CD4-positive, alpha-beta memory T cell (primary cell): ENCODE measurements at regions of chr12 and their contacts with region 1.

Region 1: GRCh38 chr12:113174461-113175384 is 10.6 kb downstream of the DDX54 start:
- DNase-seq: peak; percentile 67 to 72 (median 68)
- H3K4me3 ChIP-seq: no peak overlapping the region
- H3K4me3 Mint-ChIP-seq: no peak overlapping the region
- H3K27ac ChIP-seq: no peak overlapping the region
- H3K27ac Mint-ChIP-seq: peak overlapping the region in 4 of 7 donors; percentile 42 to 80 (median 66)
- H3K4me1 ChIP-seq: no peaks in the 10 kb centered on the region
- H3K4me1 Mint-ChIP-seq: peaks cover 2 to 7% (median 4%) of the 10 kb centered on the region in 4 donors
- H3K27me3 ChIP-seq: no peaks in the 10 kb centered on the region
- H3K27me3 Mint-ChIP-seq: no peaks in the 10 kb centered on the region

Region 2: GRCh38 chr12:112992541-112993398 is 182.0 kb before region 1 on chr12:
- CTCF ChIA-PET with region 1: interaction called, 9 read pairs
- POLR2A ChIA-PET with region 1: interaction called, 3 read pairs
- intact Hi-C with region 1: loop called (anchors 1 kb)
- DNase-seq: peak; percentile 37 to 62 (median 50)
- H3K4me3 ChIP-seq: no peak overlapping the region
- H3K4me3 Mint-ChIP-seq: no peak overlapping the region
- H3K27ac ChIP-seq: no peak overlapping the region
- H3K27ac Mint-ChIP-seq: peak overlapping the region; percentile 24 to 88 (median 67)
- H3K4me1 ChIP-seq: peaks cover 9% of the 10 kb centered on the region
- H3K4me1 Mint-ChIP-seq: peaks cover 22 to 26% (median 24%) of the 10 kb centered on the region in 4 donors
- H3K27me3 ChIP-seq: no peaks in the 10 kb centered on the region
- H3K27me3 Mint-ChIP-seq: no peaks in the 10 kb centered on the region

Region 3: GRCh38 chr12:113098446-113098896 is 76.3 kb before region 1 on chr12:
- CTCF ChIA-PET with region 1: interaction called, 13 read pairs
- POLR2A ChIA-PET with region 1: no interaction called
- intact Hi-C with region 1: loop called (anchors 2 kb)
- DNase-seq: peak; percentile 52 to 68 (median 60)
- H3K4me3 ChIP-seq: no peak overlapping the region
- H3K4me3 Mint-ChIP-seq: peak overlapping the region in 1 of 8 donors; percentile 4
- H3K27ac ChIP-seq: no peak overlapping the region
- H3K27ac Mint-ChIP-seq: peak overlapping the region in 4 of 7 donors; percentile 64 to 85 (median 75)
- H3K4me1 ChIP-seq: peaks cover 13% of the 10 kb centered on the region
- H3K4me1 Mint-ChIP-seq: peaks cover 14 to 41% (median 20%) of the 10 kb centered on the region in 4 donors
- H3K27me3 ChIP-seq: no peaks in the 10 kb centered on the region
- H3K27me3 Mint-ChIP-seq: peaks cover 0 to 1% of the 10 kb centered on the region in 2 donors

Region 4: GRCh38 chr12:113103756-113104450 is 70.8 kb before region 1 on chr12:
- CTCF ChIA-PET with region 1: interaction called, 13 read pairs
- POLR2A ChIA-PET with region 1: no interaction called
- intact Hi-C with region 1: loop called (anchors 2 kb)
- DNase-seq: peak; percentile 67 to 78 (median 74)
- H3K4me3 ChIP-seq: peak overlapping the region in 1 of 2 donors; percentile 64
- H3K4me3 Mint-ChIP-seq: peak overlapping the region; percentile 80 to 89 (median 86)
- H3K27ac ChIP-seq: peak overlapping the region; percentile 1
- H3K27ac Mint-ChIP-seq: peak overlapping the region; percentile 66 to 94 (median 87)
- H3K4me1 ChIP-seq: peaks cover 6% of the 10 kb centered on the region
- H3K4me1 Mint-ChIP-seq: peaks cover 9 to 24% (median 14%) of the 10 kb centered on the region in 4 donors
- H3K27me3 ChIP-seq: no peaks in the 10 kb centered on the region
- H3K27me3 Mint-ChIP-seq: peaks cover 0 to 1% of the 10 kb centered on the region in 2 donors

Region 5: GRCh38 chr12:113152835-113153814 is 21.6 kb before region 1 on chr12:
- CTCF ChIA-PET with region 1: interaction called, 18 read pairs
- POLR2A ChIA-PET with region 1: interaction called, 3 read pairs
- intact Hi-C with region 1: no loop called
- DNase-seq: peak; percentile 70 to 85 (median 74)
- H3K4me3 ChIP-seq: peak overlapping the region in 1 of 2 donors; percentile 57
- H3K4me3 Mint-ChIP-seq: peak overlapping the region; percentile 73 to 87 (median 85)
- H3K27ac ChIP-seq: peak overlapping the region; percentile 30
- H3K27ac Mint-ChIP-seq: peak overlapping the region in 6 of 7 donors; percentile 9 to 86 (median 75)
- H3K4me1 ChIP-seq: peaks cover 20% of the 10 kb centered on the region
- H3K4me1 Mint-ChIP-seq: peaks cover 9 to 29% (median 13%) of the 10 kb centered on the region in 4 donors
- H3K27me3 ChIP-seq: peaks cover 6% of the 10 kb centered on the region
- H3K27me3 Mint-ChIP-seq: peaks cover 0 to 9% of the 10 kb centered on the region in 2 donors

Region 6: DNA sequence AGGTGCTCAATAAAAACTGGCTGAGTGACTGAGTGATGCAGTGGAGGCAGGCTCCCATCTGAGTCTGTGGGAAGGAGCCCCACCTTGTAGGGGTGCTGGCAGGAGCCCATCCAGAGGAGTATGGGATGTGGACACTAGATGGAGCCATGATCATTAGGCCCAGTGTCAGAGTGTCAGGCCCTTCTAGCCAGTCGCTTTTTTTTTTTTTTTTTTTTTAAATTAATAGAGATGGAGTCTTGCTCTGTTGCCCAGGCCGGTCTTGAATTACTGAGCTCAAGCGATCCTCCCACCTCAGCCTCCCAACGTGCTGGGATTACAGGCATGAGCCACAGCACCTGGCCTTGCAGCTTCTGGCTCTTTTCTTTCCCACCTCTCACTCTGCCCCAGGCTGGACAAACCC is 22.3 kb after region 1 on chr12:
- CTCF ChIA-PET with region 1: interaction called, 11 read pairs
- POLR2A ChIA-PET with region 1: no interaction called
- intact Hi-C with region 1: no loop called
- DNase-seq: peak; percentile 59 to 68 (median 62)
- H3K4me3 ChIP-seq: no peak overlapping the region
- H3K4me3 Mint-ChIP-seq: no peak overlapping the region
- H3K27ac ChIP-seq: no peak overlapping the region
- H3K27ac Mint-ChIP-seq: peak overlapping the region in 2 of 7 donors; percentile 46 to 73
- H3K4me1 ChIP-seq: no peaks in the 10 kb centered on the region
- H3K4me1 Mint-ChIP-seq: peaks cover 0 to 4% (median 4%) of the 10 kb centered on the region in 4 donors
- H3K27me3 ChIP-seq: no peaks in the 10 kb centered on the region
- H3K27me3 Mint-ChIP-seq: no peaks in the 10 kb centered on the region